B cell (primary cell): ENCODE measurements at regions of chr2 and their contacts with region 1.

Region 1: DNA sequence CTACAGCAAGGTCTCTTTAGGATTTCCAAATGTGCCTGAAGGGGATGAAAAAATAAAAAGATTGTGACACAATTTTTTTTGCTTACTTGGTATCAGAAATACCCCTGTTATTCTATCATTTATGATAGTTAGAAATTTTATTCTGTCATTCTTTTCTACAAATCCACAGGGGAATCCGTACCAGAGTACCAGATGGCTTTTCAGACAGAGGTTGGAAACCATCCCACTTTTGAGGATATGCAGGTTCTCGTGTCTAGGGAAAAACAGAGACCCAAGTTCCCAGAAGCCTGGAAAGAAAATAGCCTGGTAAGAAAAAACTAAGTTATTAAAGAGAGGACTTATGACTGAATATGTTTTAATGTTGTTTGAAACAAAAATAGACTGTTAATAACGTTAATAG is 92.6 kb upstream of the FAM117B start:
- DNase-seq: no peak
- ATAC-seq: no peak
- H3K4me3 ChIP-seq: no peak overlapping the region
- H3K4me3 Mint-ChIP-seq: no peak overlapping the region
- H3K27ac ChIP-seq: no peak overlapping the region
- H3K27ac Mint-ChIP-seq: no peak overlapping the region
- H3K4me1 ChIP-seq: no peaks in the 10 kb centered on the region
- H3K4me1 Mint-ChIP-seq: no peaks in the 10 kb centered on the region
- H3K27me3 ChIP-seq: no peaks in the 10 kb centered on the region
- H3K27me3 Mint-ChIP-seq: no peaks in the 10 kb centered on the region
- CTCF ChIP-seq: no peak

Region 2: DNA sequence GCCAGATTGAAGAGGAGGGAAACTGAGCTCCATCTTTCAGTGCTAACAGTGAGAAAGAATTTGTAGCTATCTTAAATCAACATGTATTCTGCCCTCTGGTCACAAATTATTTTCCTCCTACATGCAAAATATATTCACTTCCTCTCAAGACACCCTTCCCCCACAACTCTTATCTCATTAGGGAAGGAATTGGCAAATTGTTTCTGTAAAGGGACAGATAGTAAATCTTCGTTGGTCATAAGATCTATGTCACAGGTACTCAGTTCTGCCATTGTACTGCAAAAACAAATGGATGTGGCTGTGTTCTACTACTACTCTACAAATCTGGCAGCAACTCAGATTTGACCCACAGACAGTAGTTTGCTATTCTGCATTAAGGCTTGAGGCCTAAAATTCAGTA is 643.7 kb after region 1 on chr2:
- CTCF ChIA-PET with region 1: no interaction called
- POLR2A ChIA-PET with region 1: interaction called, 13 read pairs
- intact Hi-C with region 1: no loop called
- DNase-seq: no peak
- ATAC-seq: no peak
- H3K4me3 ChIP-seq: no peak overlapping the region
- H3K4me3 Mint-ChIP-seq: no peak overlapping the region
- H3K27ac ChIP-seq: no peak overlapping the region
- H3K27ac Mint-ChIP-seq: no peak overlapping the region
- H3K4me1 ChIP-seq: no peaks in the 10 kb centered on the region
- H3K4me1 Mint-ChIP-seq: no peaks in the 10 kb centered on the region
- H3K27me3 ChIP-seq: no peaks in the 10 kb centered on the region
- H3K27me3 Mint-ChIP-seq: no peaks in the 10 kb centered on the region
- CTCF ChIP-seq: no peak